ENCODE measurements at regions of chr22 and their contacts with region 1.

Region 1: DNA sequence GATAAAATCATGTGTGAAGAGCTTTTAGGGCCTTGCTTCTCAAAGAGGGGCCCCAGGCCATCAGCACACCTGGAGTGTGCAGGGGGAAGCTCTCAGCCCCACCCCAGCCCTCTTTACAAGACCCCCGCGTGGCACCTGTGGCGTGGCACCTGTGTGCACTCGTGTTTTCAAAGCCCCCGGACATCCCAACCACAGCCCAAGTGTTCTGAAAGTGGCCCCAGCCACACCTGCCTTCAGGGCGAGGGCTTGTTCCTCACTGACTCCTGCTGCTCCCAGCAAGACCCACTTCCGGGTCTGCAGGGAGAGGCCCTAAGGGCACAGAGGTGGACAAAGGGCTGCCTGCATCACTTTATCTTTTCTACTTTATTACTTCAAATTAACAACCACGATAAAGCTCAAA is 17.5 kb upstream of the TMEM184B start:
- DNase-seq: no peak
- ATAC-seq: no peak
- H3K4me3 Mint-ChIP-seq: no peak overlapping the region
- H3K27ac Mint-ChIP-seq: no peak overlapping the region
- H3K4me1 Mint-ChIP-seq: no peaks in the 10 kb centered on the region
- H3K27me3 Mint-ChIP-seq: no peaks in the 10 kb centered on the region

Region 2: DNA sequence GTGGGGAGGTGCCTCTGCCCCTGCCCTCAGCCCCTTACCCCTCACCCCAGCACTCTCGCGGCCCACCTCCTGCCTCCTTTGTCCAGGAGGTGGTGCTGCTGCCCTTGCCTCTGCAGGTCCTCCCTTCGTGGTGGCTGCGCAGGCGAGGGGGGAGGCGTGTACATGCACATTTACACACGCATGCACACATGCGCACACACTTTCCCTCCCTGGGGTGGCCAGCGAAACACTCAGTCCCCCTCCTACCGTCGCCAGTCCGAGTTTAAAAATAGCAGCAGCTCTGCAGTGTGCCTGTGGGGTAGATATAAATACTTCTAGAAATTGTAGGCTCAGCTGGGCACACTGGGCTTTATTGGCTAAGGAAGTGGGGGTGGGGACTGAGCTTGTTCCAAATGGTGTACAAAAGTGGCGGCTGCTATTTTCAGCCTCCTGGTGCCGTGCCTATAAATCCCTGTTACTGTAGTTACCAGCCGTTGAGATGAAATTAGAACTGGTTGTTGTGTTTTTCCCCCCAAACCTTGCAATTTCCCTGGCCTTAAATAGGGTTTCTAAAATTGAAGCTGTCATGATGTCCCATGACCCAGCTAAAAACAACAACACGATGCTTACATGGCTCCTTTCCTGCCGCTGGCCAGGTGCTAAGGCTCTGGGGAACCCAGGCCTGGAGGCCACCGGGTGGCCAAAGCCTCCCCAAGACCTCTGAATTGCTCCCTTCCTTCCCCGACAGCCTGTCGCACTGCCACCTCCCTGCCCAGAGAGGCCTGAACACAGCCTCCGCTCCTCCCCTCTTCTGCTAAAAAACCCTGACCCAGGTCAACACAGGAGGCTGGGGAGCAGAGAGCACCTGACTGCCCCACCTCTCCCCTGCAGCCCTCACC is 220.7 kb before region 1 on chr22:
- CTCF ChIA-PET with region 1: no interaction called
- POLR2A ChIA-PET with region 1: interaction called, 10 read pairs
- DNase-seq: no peak
- ATAC-seq: no peak
- H3K4me3 Mint-ChIP-seq: no peak overlapping the region
- H3K27ac Mint-ChIP-seq: no peak overlapping the region
- H3K4me1 Mint-ChIP-seq: no peaks in the 10 kb centered on the region
- H3K27me3 Mint-ChIP-seq: no peaks in the 10 kb centered on the region

Region 3: DNA sequence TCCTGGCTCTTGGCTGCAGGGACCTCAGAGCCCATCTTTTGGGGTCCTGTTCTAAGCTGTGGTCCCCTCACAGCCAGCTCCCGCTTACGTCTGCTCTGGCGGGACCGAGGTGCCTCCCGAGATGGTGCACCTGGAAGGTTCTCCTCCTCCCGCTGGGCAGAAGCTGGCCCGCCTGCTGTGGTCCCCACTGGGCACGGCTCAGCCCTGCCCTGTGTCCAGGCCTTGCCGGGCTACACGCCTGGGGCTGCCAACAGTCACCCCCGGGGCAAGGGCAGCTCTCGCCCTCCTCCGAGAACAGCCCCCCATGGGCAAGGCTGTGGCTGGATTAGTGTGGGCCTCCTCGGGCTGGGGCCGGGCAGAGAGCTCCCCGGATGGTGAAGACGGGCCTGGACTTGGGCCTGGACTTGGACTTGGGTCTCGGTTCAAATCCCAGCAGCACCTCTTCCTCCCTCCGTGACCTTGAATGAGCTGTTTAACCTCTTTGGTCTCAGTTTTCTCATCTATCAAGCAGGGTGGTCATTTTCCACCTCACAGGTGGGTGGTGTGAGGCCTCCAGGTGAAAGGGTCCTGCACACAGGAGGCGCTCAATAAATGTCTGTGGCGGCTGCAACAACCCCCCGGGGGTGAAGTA is 180.9 kb before region 1 on chr22:
- CTCF ChIA-PET with region 1: no interaction called
- POLR2A ChIA-PET with region 1: no interaction called
- DNase-seq: peak; percentile 30
- ATAC-seq: peak; percentile 27
- H3K4me3 Mint-ChIP-seq: peak overlapping the region; percentile 40
- H3K27ac Mint-ChIP-seq: peak overlapping the region; percentile 76
- H3K4me1 Mint-ChIP-seq: peaks cover 12% of the 10 kb centered on the region
- H3K27me3 Mint-ChIP-seq: no peaks in the 10 kb centered on the region

Measured in activated CD8-positive, alpha-beta T cell treated with anti-CD3 and anti-CD28 coated beads, Interleukin-2, amount 10 ng/mL, durations not matched to agents 7 days and 5 days (primary cell).